ENCODE measurements at regions of chr12 and their contacts with region 1.

Region 1: DNA sequence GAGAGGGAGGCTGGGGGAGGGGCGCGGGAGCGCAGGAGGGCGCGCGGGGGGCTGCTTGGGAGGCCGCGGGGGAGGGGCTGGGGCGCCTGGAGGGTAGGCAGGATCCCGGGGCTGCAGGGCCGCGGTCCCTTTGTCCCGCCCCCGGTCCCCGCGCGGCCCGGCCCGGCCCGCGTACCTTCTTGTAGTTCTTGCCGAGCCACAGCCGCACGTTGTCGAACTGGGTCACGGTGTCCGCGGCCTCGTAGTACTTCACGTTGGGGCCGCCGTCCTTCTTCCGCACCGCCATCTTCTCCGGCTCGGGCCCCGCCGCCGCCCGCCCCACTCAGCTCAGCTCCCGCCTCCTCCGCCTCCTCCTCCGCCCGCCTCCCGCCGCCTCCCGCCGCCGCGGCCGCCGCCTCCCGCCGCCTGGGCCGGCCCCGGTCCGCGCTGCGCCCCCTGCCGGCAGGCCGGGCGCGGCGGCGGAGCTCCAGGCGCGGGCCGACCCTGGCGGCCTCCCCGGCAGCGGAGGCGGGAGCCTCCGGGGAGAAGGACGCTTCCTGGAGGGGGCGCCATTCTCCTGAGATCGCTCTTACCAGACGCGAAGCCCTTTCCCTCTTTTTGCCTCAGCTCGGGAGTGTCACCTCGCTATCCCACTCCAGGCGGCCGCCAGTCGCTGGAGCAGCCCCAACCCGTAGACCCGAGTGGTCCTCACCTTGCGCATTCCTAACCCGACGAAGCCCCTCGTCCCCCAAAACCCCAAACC is at the start of gene SMARCC2:
- DNase-seq: peak; percentile 96
- H3K4me3 Mint-ChIP-seq: peak within 1 kb of the TSS; percentile 89
- H3K27ac Mint-ChIP-seq: peak within 1 kb of the TSS; percentile 98
- H3K4me1 Mint-ChIP-seq: peaks cover 41% of the 10 kb centered on the region
- H3K27me3 Mint-ChIP-seq: no peaks in the 10 kb centered on the region
- CTCF ChIP-seq: peak; percentile 94
- total RNA-seq, gene SMARCC2: 143 and 150 TPM in 2 replicates

Region 2: DNA sequence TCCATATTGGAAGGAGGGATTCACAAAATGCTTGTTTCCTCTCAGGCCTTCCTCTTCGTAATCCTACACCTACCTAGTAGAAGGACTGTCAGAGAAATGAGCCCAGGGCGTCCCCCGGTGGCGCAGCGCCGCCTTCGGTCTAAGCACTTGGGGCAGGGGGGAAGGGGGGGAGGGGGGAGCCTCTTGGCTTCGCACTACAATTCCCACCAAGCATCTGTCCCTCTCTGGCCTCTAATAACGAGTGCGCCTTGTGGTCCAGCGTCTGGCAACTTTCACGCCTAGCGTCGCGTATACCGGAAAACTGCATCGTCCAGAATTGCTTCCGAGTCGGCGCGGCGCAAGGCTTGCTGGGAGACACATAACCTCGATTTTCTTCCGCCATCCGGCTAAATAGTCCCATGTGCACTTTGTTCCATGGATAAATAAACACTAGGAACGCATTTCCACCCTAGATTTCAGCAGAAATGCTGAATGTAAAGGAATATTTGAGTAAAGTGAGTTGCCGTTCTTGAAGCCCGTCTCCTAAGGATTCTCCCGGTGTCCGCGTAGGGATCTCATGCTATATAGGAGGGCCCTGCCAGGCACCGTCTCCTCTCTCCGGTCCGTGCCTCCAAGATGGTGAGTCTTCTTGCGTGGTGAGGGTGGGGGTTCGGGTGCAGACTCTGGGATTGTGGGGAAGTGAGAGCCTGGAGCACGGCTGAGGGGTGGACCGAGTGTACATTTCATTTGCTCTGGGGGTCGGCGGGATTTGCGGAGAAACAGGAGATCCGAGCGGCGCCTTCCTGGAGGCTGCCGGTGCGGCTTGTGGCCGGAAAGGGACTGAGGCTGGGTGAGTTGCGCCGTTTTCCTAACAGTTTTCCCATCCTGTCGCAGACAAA is 147.6 kb before region 1 on chr12 and contains the start of gene RPS26:
- CTCF ChIA-PET with region 1: no interaction called
- intact Hi-C with region 1: loop called (anchors 10 kb)
- DNase-seq: peak; percentile 93
- H3K4me3 Mint-ChIP-seq: peak within 1 kb of the TSS; percentile 90
- H3K27ac Mint-ChIP-seq: peak within 1 kb of the TSS; percentile 95
- H3K4me1 Mint-ChIP-seq: peaks cover 18% of the 10 kb centered on the region
- H3K27me3 Mint-ChIP-seq: no peaks in the 10 kb centered on the region
- CTCF ChIP-seq: peak; percentile 51
- total RNA-seq, gene RPS26: 50.6 and 50.7 TPM in 2 replicates

Region 3: GRCh38 chr12:56127888-56128669 is 61.3 kb before region 1 on chr12 and contains the start of gene ESYT1:
- CTCF ChIA-PET with region 1: interaction called, 20 read pairs
- intact Hi-C with region 1: loop called (anchors 2 kb)
- DNase-seq: peak; percentile 99
- H3K4me3 Mint-ChIP-seq: peak within 1 kb of the TSS; percentile 98
- H3K27ac Mint-ChIP-seq: peak within 1 kb of the TSS; percentile 72
- H3K4me1 Mint-ChIP-seq: peaks cover 35% of the 10 kb centered on the region
- H3K27me3 Mint-ChIP-seq: no peaks in the 10 kb centered on the region
- CTCF ChIP-seq: no peak
- total RNA-seq, gene ESYT1: 72.7 and 91.1 TPM in 2 replicates

Region 4: GRCh38 chr12:56158029-56158925 is 31.1 kb before region 1 on chr12 and contains the start of gene MYL6:
- CTCF ChIA-PET with region 1: interaction called, 11 read pairs
- intact Hi-C with region 1: no loop called
- DNase-seq: peak; percentile 96
- H3K4me3 Mint-ChIP-seq: peak within 1 kb of the TSS; percentile 98
- H3K27ac Mint-ChIP-seq: peak within 1 kb of the TSS; percentile 100
- H3K4me1 Mint-ChIP-seq: peaks cover 32% of the 10 kb centered on the region
- H3K27me3 Mint-ChIP-seq: no peaks in the 10 kb centered on the region
- CTCF ChIP-seq: no peak
- total RNA-seq, gene MYL6: 1,037 and 1,130 TPM in 2 replicates

Region 5: DNA sequence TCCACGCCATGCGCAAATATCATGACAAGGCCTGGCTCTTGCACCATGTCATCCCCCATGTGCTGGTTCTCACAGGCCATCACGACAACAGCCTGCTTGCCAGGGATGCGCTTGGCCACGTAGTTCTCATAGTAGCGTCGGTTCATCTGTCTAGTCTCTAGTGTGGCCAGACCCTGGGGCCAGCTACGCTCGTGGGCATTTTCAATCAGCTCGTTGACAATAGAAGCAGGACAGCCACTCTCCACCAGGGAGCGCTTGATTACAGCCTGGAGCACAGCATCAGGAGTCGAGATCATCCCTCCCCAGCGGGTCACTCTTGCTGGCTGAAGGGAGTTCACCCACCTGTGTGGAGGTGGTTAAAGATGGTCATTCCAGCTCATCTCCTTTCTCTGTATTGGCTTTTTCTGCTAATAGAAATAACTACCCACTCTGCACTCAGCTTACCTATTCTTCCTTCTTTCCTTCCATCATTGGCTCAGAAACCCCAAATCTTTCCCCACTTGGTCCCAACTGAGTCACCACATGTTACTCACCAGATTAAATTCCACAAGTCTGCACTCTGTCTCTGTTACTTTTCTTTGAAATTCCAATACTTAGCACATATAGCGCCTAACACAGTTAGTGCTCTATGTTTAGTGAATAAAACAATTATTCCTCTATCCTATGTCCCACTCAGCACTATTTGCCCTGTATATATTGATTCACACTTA is 17.3 kb after region 1 on chr12:
- CTCF ChIA-PET with region 1: interaction called, 12 read pairs
- intact Hi-C with region 1: no loop called
- DNase-seq: peak; percentile 58
- H3K4me3 Mint-ChIP-seq: no peak overlapping the region
- H3K27ac Mint-ChIP-seq: no peak overlapping the region
- H3K4me1 Mint-ChIP-seq: no peaks in the 10 kb centered on the region
- H3K27me3 Mint-ChIP-seq: no peaks in the 10 kb centered on the region
- CTCF ChIP-seq: peak; percentile 62

Region 6: DNA sequence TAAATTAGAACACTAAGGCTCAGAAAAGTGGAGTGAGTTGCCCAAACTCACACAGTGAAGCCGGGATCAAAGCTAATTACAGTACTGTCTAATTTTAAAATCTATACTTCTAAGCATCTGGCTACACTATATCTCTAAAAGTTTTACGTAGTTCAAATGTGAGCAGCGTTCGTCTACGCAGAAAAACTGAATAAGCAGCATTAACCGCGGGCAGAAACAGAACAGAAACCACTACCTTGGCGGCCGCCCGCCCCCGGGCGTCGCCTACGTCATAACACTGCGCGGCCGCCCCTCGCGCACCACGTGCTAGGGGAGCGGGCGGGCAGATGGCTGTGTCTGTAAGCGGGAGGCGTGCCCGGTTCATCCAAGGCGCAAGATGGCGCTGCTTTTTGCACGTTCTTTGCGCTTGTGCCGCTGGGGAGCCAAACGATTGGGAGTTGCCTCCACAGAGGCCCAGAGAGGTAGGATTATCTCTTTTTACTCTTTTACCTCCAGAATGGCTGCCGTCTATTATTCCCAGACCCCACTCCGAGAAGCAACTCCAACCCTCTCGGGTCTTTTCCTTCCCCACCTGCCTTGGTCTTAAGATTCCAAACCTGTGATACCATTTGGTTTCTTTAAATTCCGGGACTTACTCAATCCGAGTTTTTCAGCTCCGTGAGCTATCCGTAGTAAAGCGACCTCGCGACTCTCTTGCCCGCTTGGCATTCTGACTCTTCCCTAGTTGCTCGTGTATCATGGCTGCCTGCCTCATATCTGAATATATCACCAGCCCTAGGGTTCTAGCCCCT is 279.1 kb after region 1 on chr12 and contains the start of gene SPRYD4:
- CTCF ChIA-PET with region 1: interaction called, 6 read pairs
- intact Hi-C with region 1: loop called (anchors 1 kb)
- DNase-seq: peak; percentile 96
- H3K4me3 Mint-ChIP-seq: peak within 1 kb of the TSS; percentile 89
- H3K27ac Mint-ChIP-seq: peak within 1 kb of the TSS; percentile 96
- H3K4me1 Mint-ChIP-seq: peaks cover 9% of the 10 kb centered on the region
- H3K27me3 Mint-ChIP-seq: no peaks in the 10 kb centered on the region
- CTCF ChIP-seq: no peak
- total RNA-seq, gene SPRYD4: 6.1 and 6.6 TPM in 2 replicates

Measured in Calu3 (cell line).